SK-N-SH (cell line): ENCODE measurements at regions of chr17 and their contacts with region 1.

Region 1: GRCh38 chr17:63549946-63550807 is at the start of gene DCAF7:
- DNase-seq: peak; percentile 100
- H3K4me3 ChIP-seq: peak within 1 kb of the TSS; percentile 85 to 93
- H3K27ac ChIP-seq: peak within 1 kb of the TSS; percentile 90 to 92
- H3K4me1 ChIP-seq: peaks cover 9 to 30% of the 10 kb centered on the region in 2 experiments; a peak in 3 of 4 replicates
- H3K27me3 ChIP-seq: no peaks in the 10 kb centered on the region
- CTCF ChIP-seq: no peak
- EP300 ChIP-seq: no peak; a peak in 1 of 4 replicates
- RAD21 ChIP-seq: peak; percentile 6; the same call in 1 of the 2 replicates
- polyA plus RNA-seq, gene DCAF7: 54.6 and 63.5 TPM in 2 replicates

Region 2: GRCh38 chr17:63434876-63435684 is 115.1 kb before region 1 on chr17:
- CTCF ChIA-PET with region 1: interaction called, 39 read pairs
- POLR2A ChIA-PET with region 1: interaction called, 7 read pairs
- DNase-seq: peak; percentile 69
- H3K4me3 ChIP-seq: no peak overlapping the region
- H3K27ac ChIP-seq: peak overlapping the region; percentile 97
- H3K4me1 ChIP-seq: peaks cover 48 to 94% of the 10 kb centered on the region in 2 experiments
- H3K27me3 ChIP-seq: no peaks in the 10 kb centered on the region
- CTCF ChIP-seq: peak; percentile 62
- EP300 ChIP-seq: peak in 1 of 2 experiments; percentile 73; a peak in 2 of 4 replicates
- RAD21 ChIP-seq: peak; percentile 25

Region 3: DNA sequence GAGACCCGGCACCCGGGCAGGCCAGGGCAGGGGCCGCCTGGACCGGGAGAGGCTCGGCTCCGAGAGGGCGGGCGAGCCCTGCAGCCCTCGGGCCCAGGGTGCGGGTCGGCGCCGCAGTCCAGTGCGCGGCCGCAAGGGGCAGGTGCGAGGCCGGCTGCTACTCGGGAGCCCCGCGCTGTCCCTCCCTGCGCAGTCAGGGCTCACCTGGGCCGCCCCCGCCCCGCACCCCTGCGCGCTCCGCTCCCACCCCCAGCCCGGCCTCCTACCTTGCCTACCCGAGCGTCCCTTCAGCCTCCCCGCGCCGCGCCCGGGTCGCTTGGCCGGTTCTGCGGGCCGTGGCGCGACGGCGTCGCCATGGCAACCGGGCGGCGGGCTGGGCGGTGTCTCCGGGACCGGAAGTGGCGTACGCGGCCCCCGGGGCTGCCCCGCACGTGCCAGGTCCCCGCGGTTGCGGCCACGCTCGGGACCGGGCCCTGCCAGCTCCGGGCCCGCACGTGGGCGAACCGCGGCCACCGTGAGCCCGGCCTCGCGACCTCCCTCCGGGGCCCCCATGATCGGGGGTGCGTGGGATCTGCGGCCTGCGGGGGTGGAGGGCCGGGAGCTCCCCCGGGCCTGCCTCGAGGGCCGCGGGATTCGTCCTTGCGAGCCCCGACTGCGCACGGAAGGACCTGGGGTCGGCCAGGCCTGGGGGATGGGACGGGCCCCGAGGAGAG is 104.0 kb before region 1 on chr17 and contains the start of gene CYB561:
- CTCF ChIA-PET with region 1: interaction called, 25 read pairs
- POLR2A ChIA-PET with region 1: interaction called, 27 read pairs
- DNase-seq: peak; percentile 97
- H3K4me3 ChIP-seq: peak within 1 kb of the TSS; percentile 56 to 64
- H3K27ac ChIP-seq: peak within 1 kb of the TSS; percentile 19 to 99; a peak in 2 of 4 replicates
- H3K4me1 ChIP-seq: peaks cover 8 to 69% of the 10 kb centered on the region in 2 experiments
- H3K27me3 ChIP-seq: no peaks in the 10 kb centered on the region
- CTCF ChIP-seq: peak; percentile 54
- EP300 ChIP-seq: no peak
- RAD21 ChIP-seq: peak; percentile 32
- polyA plus RNA-seq, gene CYB561: 28.3 and 38.6 TPM in 2 replicates

Region 4: GRCh38 chr17:63564562-63564961 is 14.4 kb after region 1 on chr17:
- CTCF ChIA-PET with region 1: interaction called, 10 read pairs
- POLR2A ChIA-PET with region 1: interaction called, 4 read pairs
- DNase-seq: no peak
- H3K4me3 ChIP-seq: no peak overlapping the region
- H3K27ac ChIP-seq: no peak overlapping the region
- H3K4me1 ChIP-seq: peaks cover 0 to 3% of the 10 kb centered on the region in 2 experiments; a peak in 1 of 4 replicates
- H3K27me3 ChIP-seq: no peaks in the 10 kb centered on the region
- CTCF ChIP-seq: no peak
- EP300 ChIP-seq: no peak
- RAD21 ChIP-seq: no peak

Region 5: DNA sequence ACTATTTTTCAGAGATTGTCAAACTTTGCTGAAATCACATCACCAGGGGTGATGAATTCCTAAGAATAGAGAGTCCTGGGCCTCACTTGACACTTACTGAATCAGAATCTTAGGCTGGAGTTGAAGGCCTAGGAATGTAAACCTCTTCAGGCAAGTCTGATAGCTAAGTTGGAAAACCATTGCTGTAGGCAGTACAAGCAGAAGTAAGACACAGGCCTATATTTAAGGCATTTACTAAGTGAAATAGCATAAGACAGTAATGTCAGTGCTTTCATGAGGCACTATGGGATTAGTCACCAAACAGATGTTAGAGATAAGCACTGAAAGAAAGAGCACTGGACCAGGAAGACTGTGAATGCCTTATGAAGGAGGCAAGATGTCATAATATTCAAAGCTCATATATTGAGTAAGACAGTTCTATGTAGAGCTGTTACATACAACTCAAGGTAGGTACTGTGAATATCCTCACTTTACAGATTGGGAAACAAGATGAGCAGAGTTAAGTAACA is 21.6 kb after region 1 on chr17:
- CTCF ChIA-PET with region 1: interaction called, 13 read pairs
- POLR2A ChIA-PET with region 1: interaction called, 4 read pairs
- DNase-seq: no peak
- H3K4me3 ChIP-seq: no peak overlapping the region
- H3K27ac ChIP-seq: peak overlapping the region in 1 of 2 experiments; percentile 71; a peak in 2 of 4 replicates
- H3K4me1 ChIP-seq: peaks cover 3 to 12% of the 10 kb centered on the region in 2 experiments; a peak in 3 of 4 replicates
- H3K27me3 ChIP-seq: no peaks in the 10 kb centered on the region
- CTCF ChIP-seq: no peak
- EP300 ChIP-seq: no peak
- RAD21 ChIP-seq: no peak